Dorsolateral prefrontal cortex (tissue), 120 donors: ENCODE measurements at regions of chr4 and their contacts with region 1.

Region 1: GRCh38 chr4:41611881-41612871 is 74.2 kb downstream of the LIMCH1 start:
- DNase-seq: peak; percentile 50 to 89 (median 86)
- H3K4me3 ChIP-seq: peak overlapping the region in 50 of 59 donors; percentile 11 to 61 (median 42)
- H3K27ac ChIP-seq: peak overlapping the region; percentile 2 to 91 (median 81)
- H3K27me3 ChIP-seq: no peaks in the 10 kb centered on the region
- CTCF ChIP-seq: peak in 26 of 56 donors; percentile 10 to 52 (median 28)

Region 2: GRCh38 chr4:41432881-41433280 is 179.3 kb before region 1 on chr4:
- intact Hi-C with region 1: loop called in 1 of 2 experiments (anchors 5 kb)
- DNase-seq: no peak
- H3K4me3 ChIP-seq: peak overlapping the region in 4 of 59 donors; percentile 4 to 23 (median 11)
- H3K27ac ChIP-seq: peak overlapping the region in 55 of 59 donors; percentile 7 to 89 (median 77)
- H3K27me3 ChIP-seq: no peaks in the 10 kb centered on the region
- CTCF ChIP-seq: no peak

Region 3: DNA sequence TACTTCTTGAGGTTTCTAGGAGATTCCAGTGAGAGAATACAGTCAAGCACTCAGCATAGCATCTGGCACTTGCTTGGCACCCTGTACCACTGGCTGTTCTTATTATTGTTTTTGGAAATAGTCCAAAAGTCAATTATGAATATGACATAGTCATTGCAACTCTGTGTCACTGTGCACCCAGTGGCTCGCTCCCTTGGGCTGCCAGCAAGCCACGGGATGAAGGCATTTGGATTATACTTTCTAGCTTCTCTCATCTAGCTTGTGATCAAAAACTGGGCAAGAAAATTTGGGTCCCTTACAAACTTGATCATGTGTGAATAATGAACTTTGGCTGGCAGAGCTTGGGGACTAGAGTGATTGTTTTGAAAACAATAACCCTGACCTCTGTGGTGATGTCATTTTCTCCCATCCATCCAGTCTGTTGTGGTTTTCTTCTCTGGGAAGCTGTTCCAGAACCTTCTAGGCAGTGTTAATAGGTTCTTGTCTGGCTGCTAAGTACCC is 107.0 kb before region 1 on chr4:
- intact Hi-C with region 1: loop called in 1 of 2 experiments (anchors 5 kb)
- DNase-seq: peak in 2 of 10 donors; percentile 22 to 52
- H3K4me3 ChIP-seq: peak overlapping the region in 1 of 59 donors; percentile 14
- H3K27ac ChIP-seq: peak overlapping the region in 46 of 59 donors; percentile 4 to 78 (median 51)
- H3K27me3 ChIP-seq: no peaks in the 10 kb centered on the region
- CTCF ChIP-seq: no peak

Region 4: DNA sequence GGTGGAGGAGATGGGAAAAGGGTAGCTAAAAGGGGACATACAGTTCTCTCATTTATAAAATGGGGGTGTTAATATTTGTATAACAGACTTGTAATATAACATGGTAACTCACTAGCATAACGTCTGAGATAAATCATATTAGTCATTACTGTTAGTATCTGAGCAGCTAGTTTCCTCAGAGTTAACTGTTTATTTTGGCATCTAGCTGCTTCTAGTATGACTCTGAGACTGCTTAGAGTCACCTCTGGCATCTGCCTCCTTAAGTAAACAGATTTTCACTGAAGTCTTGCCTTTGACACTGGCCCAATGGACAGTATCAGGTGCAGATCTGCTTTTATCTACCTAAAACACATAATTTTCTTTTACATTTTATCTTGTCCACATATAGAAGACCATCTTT is 436.2 kb after region 1 on chr4:
- intact Hi-C with region 1: no loop called
- DNase-seq: no peak
- H3K4me3 ChIP-seq: no peak overlapping the region
- H3K27ac ChIP-seq: no peak overlapping the region
- H3K27me3 ChIP-seq: no peaks in the 10 kb centered on the region
- CTCF ChIP-seq: no peak